Vagina (tissue), 2 donors: ENCODE measurements at regions of chr11 and their contacts with region 1.

Region 1: DNA sequence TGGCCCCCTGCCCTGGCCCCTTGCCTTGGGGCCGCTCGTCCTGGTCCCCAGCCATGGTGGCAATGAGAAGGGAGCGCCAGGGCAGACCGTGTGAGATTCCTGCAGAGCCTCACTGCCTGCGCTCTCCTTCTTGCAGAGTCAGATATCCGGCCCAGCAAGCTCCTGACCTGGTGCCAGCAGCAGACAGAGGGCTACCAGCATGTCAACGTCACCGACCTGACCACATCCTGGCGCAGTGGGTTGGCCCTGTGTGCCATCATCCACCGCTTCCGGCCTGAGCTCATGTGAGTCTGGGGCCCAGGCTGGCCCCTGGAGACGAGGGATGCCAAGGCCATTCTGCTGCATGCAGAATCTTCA is 114.1 kb downstream of the MICAL2 start:
- DNase-seq: no peak
- H3K4me3 ChIP-seq: no peak overlapping the region
- H3K27ac ChIP-seq: peak overlapping the region; percentile 26
- H3K4me1 ChIP-seq: peaks cover 57% of the 10 kb centered on the region
- H3K27me3 ChIP-seq: no peaks in the 10 kb centered on the region
- CTCF ChIP-seq: no peak
- POLR2A ChIP-seq: no peak

Region 2: DNA sequence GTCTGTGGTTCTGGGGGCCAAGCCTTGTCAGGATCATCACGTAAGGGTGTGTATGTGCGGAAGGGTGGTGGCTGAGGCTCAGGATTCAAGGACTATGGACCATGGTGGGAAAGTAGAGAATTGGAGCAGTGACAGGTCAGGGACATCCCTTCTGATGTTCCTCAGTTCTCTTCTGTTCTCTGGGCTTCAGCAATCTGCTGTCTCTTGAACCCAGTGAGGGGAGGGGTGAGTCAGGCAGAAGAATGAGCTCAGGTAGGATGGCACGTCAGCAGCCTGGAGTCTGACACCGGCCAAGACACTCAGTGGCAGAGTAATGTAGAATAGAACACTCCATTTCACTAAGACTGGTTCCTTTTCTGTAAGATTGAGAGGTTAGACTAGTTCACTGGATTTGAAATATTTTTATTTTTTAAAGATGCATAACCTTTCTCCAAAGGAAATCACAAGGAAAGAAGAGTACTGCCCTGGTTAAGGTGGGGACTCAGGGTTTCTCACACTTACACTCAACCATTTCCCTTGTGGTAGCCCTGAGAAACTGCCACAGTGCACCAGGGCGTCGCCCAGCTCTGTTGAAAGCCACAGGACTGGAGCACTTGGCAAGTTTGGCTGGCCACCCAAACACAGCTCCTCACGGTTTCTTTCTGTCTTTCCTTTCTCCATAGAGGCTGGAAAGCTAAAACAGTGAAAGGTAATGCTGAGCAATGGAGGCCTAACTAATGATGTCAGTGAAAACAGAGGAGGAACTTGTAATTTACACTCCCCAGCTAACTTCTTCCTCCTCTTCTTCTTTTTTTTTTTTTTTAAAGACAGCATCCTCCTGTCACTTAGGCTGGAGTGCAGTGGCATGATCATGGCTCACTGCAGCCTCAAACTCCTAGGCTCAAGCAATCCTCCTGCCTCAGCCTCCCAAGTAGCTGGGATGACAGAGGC is 137.2 kb before region 1 on chr11:
- intact Hi-C with region 1: loop called (anchors 10 kb)
- DNase-seq: no peak
- H3K4me3 ChIP-seq: no peak overlapping the region
- H3K27ac ChIP-seq: peak overlapping the region; percentile 88
- H3K4me1 ChIP-seq: peaks cover 52% of the 10 kb centered on the region
- H3K27me3 ChIP-seq: no peaks in the 10 kb centered on the region
- CTCF ChIP-seq: no peak
- POLR2A ChIP-seq: no peak

Region 3: GRCh38 chr11:12174477-12175143 is 49.9 kb before region 1 on chr11:
- intact Hi-C with region 1: no loop called
- DNase-seq: no peak
- H3K4me3 ChIP-seq: no peak overlapping the region
- H3K27ac ChIP-seq: no peak overlapping the region
- H3K4me1 ChIP-seq: peaks cover 18% of the 10 kb centered on the region
- H3K27me3 ChIP-seq: no peaks in the 10 kb centered on the region
- CTCF ChIP-seq: no peak
- POLR2A ChIP-seq: no peak

Region 4: DNA sequence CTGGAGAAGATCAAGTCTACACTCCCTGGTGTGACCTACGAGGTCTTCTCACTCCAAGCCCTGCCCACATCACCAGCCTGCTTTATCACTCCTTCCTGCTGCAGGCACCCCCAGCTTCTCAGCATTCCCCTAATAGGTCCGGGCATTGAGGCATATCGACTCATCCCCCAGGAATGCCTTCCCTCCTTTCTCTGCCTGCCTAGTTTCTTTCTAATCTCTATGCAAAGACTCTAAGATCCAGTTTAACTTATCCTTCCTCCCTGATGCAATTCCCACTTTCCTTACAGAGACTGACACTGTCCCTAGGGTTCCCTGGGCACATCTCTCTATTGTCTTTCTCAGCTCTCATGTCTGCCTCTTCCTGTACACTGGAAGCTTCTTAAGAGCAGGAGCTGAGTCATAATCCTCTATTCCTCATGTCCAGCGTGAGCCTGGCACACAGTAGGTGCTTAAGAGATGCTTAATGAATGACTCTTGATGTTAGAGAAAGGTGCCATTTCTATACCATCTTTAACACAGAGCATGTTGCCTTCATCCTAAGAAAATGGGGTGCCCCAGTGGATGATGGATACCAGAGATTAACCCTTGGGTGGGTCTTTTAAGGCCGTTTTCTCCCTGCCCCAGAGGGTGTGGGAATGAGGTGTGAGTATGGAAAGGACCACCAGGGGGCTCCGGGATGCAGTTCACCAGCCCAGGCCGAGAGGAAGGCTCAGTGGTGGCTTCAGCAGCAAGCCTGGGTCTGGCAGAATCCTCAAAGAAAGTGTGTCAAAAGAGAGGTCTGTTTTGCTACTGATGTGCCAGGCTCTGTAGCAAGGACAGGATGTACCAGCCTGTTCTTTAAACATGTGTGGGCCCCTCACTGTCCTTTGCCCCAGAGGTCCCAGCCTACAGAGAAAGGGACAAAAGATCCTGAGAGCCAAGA is 187.6 kb after region 1 on chr11:
- intact Hi-C with region 1: no loop called
- DNase-seq: no peak
- H3K4me3 ChIP-seq: no peak overlapping the region
- H3K27ac ChIP-seq: peak overlapping the region; percentile 86
- H3K4me1 ChIP-seq: peaks cover 70% of the 10 kb centered on the region
- H3K27me3 ChIP-seq: no peaks in the 10 kb centered on the region
- CTCF ChIP-seq: peak; percentile 45 to 83 (median 45)
- POLR2A ChIP-seq: no peak

Region 5: DNA sequence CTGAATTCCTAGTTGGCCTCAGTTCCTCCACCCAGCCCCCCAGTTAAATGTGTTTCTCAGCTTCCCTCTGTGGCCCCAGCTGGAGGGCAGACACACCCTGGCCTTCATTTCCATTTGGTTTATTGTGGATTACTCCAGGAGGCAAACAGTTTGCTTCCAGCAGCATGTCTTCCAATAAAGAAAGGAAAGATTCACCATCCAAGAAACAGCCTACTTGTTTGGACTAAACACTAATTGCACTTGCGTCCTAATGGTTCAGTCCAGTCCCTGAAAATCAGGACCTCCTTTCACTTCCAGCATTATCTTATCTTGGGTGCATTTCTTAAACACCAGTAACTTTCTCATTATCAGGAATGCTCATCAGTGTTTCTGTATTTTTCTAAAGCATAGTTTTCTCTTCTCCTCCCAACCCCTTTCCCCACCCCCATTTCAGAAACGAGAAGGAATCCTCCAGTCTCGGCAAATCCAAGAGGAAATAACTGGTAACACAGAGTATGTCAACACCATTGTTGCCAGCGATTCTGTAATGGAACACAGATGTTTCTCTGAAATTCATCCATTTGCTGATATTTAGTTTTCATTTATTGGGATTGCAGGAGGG is 283.7 kb after region 1 on chr11:
- intact Hi-C with region 1: no loop called
- DNase-seq: no peak
- H3K4me3 ChIP-seq: no peak overlapping the region
- H3K27ac ChIP-seq: peak overlapping the region; percentile 70
- H3K4me1 ChIP-seq: peaks cover 39% of the 10 kb centered on the region
- H3K27me3 ChIP-seq: no peaks in the 10 kb centered on the region
- CTCF ChIP-seq: no peak
- POLR2A ChIP-seq: no peak